ENCODE measurements at regions of chr20 and their contacts with region 1.

Region 1: GRCh38 chr20:3820048-3820900 is at the start of gene AP5S1:
- DNase-seq: peak; percentile 96
- H3K4me3 ChIP-seq: peak within 1 kb of the TSS; percentile 50 to 86 (median 55)
- H3K27ac ChIP-seq: peak within 1 kb of the TSS; percentile 84
- H3K4me1 ChIP-seq: peaks cover 7% of the 10 kb centered on the region
- H3K27me3 ChIP-seq: no peaks in the 10 kb centered on the region
- CTCF ChIP-seq: peak; percentile 92 to 100
- POLR2A ChIP-seq: peak; percentile 81
- total RNA-seq, gene AP5S1: 19.2 and 22.0 TPM in 2 replicates

Region 2: GRCh38 chr20:3679749-3680700 is 140.2 kb before region 1 on chr20:
- CTCF ChIA-PET with region 1: interaction called, 9 read pairs
- POLR2A ChIA-PET with region 1: no interaction called
- dilution Hi-C with region 1: no loop called
- intact Hi-C with region 1: loop called (anchors 1 kb)
- DNase-seq: no peak
- H3K4me3 ChIP-seq: no peak overlapping the region
- H3K27ac ChIP-seq: no peak overlapping the region
- H3K4me1 ChIP-seq: no peaks in the 10 kb centered on the region
- H3K27me3 ChIP-seq: peaks cover 25 to 33% of the 10 kb centered on the region in 2 experiments
- CTCF ChIP-seq: no peak
- POLR2A ChIP-seq: no peak

Region 3: DNA sequence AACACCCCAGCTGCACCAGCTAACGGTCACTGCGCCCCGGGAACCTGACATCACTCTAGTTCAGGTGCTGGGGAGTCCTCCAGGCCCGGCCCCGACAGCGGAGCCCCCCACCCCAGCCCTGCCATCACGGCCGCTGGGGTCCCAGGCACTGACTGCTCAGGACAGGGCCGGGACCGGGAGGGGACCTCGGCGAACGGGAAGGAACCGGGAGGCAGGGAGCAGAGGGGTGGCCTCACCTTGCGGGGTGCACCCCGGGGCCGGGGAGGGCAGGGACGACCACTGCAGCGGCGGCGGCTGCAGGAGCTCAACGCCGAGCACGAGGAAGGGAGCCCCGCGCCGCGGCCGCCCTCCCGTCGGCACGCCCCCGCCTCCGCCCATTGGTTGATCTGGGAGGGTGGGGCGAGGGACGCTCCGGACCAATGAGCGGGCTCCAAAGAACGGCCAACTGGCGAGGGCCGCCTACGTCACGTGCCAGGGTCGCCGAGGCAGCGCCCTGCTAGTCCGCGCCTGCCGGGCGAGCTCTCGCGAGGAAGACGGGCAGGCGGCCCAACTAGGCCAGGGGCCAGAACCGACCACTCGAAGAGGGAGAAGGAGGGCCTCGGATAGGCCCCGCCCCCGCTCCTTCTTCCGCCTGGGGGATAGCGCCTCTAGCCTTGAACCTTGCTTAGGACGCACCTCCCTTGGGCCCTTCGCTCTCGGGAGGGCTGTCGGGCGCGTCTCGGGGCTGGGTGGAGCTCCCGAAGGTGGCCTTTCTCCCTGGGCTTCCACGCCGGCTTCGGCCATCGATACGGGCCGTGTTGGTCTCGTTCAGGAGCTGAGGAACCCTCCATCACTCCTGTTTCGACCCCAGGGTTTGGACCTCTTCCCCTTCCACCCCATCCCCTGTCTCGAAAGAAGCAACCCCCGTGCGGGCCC is 52.6 kb before region 1 on chr20 and contains the start of gene ADISSP:
- CTCF ChIA-PET with region 1: interaction called, 23 read pairs
- POLR2A ChIA-PET with region 1: interaction called, 5 read pairs
- dilution Hi-C with region 1: no loop called
- intact Hi-C with region 1: no loop called
- DNase-seq: peak; percentile 98
- H3K4me3 ChIP-seq: peak within 1 kb of the TSS; percentile 61 to 71 (median 61)
- H3K27ac ChIP-seq: peak within 1 kb of the TSS; percentile 55
- H3K4me1 ChIP-seq: peaks cover 25% of the 10 kb centered on the region
- H3K27me3 ChIP-seq: no peaks in the 10 kb centered on the region
- CTCF ChIP-seq: no peak
- POLR2A ChIP-seq: peak; percentile 72
- total RNA-seq, gene ADISSP: 55.0 and 55.8 TPM in 2 replicates

Region 4: DNA sequence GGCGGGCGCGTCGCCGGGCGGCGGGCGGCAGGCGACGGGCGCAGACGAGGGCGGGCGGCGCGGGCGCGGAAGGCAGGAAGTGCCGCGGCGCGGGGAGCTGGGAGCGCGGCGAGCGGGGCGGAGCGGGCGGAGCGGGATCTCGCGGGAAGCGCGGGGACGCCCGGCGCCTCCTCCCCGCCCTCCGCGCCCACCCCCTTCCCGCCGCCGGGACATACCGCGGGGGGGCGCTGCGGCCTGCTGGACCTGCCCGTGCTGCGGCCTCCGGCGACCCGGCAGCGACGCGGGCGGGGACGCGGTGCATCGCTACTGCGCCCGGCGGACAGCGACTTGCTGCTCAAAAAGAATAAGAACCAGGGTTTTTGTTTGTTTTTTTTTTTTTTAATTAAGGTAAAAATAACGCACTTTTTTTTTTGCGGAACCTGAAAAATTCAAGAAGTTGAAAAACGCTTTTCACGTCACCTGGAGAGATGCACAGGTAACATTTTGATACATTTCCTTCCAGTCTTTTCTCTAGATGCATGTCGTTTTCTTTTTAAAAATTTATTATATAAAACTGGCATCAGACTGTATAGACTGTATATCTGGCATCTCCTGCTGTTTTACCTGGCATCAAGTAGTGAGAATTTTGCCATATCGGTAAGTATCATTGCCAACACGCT is 33.5 kb before region 1 on chr20 and contains the start of gene CENPB:
- CTCF ChIA-PET with region 1: interaction called, 214 read pairs
- POLR2A ChIA-PET with region 1: interaction called, 4 read pairs
- dilution Hi-C with region 1: no loop called
- intact Hi-C with region 1: loop called (anchors 1 kb)
- DNase-seq: peak; percentile 83
- H3K4me3 ChIP-seq: peak within 1 kb of the TSS; percentile 30 to 62 (median 58)
- H3K27ac ChIP-seq: peak within 1 kb of the TSS; percentile 0
- H3K4me1 ChIP-seq: peaks cover 18% of the 10 kb centered on the region
- H3K27me3 ChIP-seq: no peaks in the 10 kb centered on the region
- CTCF ChIP-seq: peak; percentile 56 to 62
- POLR2A ChIP-seq: no peak
- total RNA-seq, gene CENPB: 82.2 and 90.3 TPM in 2 replicates

Region 5: GRCh38 chr20:3839169-3839727 is 19.0 kb after region 1 on chr20:
- CTCF ChIA-PET with region 1: interaction called, 10 read pairs
- POLR2A ChIA-PET with region 1: interaction called, 4 read pairs
- dilution Hi-C with region 1: no loop called
- intact Hi-C with region 1: loop called (anchors 2 kb)
- DNase-seq: peak; percentile 46
- H3K4me3 ChIP-seq: no peak overlapping the region
- H3K27ac ChIP-seq: no peak overlapping the region
- H3K4me1 ChIP-seq: peaks cover 2% of the 10 kb centered on the region
- H3K27me3 ChIP-seq: no peaks in the 10 kb centered on the region
- CTCF ChIP-seq: no peak
- POLR2A ChIP-seq: no peak

Region 6: DNA sequence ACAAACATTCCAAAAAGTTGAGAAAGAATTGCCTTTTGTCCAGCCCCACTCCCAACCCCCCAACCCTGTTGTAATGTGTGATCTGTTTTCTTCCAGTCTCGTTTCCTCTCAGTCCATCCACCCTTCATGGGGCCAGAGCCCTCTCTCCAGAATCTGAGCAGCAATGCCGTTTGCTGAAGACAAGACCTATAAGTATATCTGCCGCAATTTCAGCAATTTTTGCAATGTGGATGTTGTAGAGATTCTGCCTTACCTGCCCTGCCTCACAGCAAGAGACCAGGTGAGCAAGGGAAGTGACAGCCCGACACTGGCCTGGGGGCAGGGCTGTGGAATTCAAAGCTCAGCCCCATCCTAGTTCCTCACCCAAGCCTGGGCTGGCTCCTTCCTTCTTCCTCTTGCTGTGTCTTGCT is 34.2 kb after region 1 on chr20:
- CTCF ChIA-PET with region 1: interaction called, 12 read pairs
- POLR2A ChIA-PET with region 1: interaction called, 3 read pairs
- dilution Hi-C with region 1: no loop called
- intact Hi-C with region 1: loop called (anchors 1 kb)
- DNase-seq: no peak
- H3K4me3 ChIP-seq: no peak overlapping the region
- H3K27ac ChIP-seq: no peak overlapping the region
- H3K4me1 ChIP-seq: no peaks in the 10 kb centered on the region
- H3K27me3 ChIP-seq: no peaks in the 10 kb centered on the region
- CTCF ChIP-seq: no peak
- POLR2A ChIP-seq: no peak

Region 7: DNA sequence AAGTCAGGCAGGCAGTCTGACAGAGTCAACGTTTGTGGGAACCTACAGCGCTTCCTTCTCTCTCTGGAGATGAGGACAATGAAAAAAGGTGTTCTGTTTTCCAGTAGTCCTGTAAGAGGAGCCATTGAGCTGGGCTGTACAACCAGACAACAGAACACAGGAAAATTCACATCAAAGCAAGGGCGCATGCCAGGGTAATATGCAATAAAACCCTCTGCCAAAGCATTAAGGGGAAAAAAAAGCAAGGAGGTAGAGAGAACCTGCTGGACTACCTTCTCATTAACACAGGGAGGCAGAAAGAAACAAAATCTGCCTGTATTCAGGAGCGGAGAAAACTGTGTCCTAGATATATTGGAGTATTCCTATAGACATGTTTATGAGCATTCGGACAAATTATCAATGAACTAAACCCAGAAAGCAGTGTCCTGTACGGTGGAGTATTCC is 193.8 kb after region 1 on chr20:
- CTCF ChIA-PET with region 1: no interaction called
- POLR2A ChIA-PET with region 1: no interaction called
- dilution Hi-C with region 1: no loop called
- intact Hi-C with region 1: loop called (anchors 1 kb)
- DNase-seq: peak; percentile 77
- H3K4me3 ChIP-seq: peak overlapping the region in 1 of 3 experiments; percentile 68
- H3K27ac ChIP-seq: no peak overlapping the region
- H3K4me1 ChIP-seq: peaks cover 10% of the 10 kb centered on the region
- H3K27me3 ChIP-seq: no peaks in the 10 kb centered on the region
- CTCF ChIP-seq: peak; percentile 46 to 53
- POLR2A ChIP-seq: no peak